ENCODE measurements at regions of chr1 and their contacts with region 1.

Region 1: GRCh38 chr1:11719313-11720032 is 16.5 kb upstream of the AGTRAP start:
- DNase-seq: peak; percentile 77 to 97
- H3K4me3 ChIP-seq: no peak overlapping the region
- CTCF ChIP-seq: no peak
- POLR2A ChIP-seq: no peak

Region 2: DNA sequence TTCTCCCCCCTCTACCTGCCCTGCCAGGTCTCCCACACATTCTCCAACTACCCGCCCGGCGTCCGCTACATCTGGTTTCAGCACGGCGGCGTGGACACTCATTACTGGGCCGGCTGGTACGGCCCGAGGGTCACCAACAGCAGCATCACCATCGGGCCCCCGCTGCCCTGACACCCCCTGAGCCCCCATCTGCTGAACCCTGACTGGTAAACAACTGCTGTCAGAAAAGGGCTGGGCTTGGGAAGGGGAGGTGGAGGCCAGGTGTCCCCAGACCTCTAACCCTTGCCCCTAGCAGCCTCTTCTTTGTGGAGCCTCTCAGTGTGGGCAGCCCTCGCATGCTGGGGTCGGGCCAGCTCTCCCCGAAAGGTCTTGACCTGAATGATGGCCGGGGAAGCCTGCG is 58.4 kb before region 1 on chr1:
- intact Hi-C with region 1: loop called (anchors 5 kb)
- DNase-seq: no peak
- H3K4me3 ChIP-seq: no peak overlapping the region
- CTCF ChIP-seq: no peak
- POLR2A ChIP-seq: no peak

Region 3: DNA sequence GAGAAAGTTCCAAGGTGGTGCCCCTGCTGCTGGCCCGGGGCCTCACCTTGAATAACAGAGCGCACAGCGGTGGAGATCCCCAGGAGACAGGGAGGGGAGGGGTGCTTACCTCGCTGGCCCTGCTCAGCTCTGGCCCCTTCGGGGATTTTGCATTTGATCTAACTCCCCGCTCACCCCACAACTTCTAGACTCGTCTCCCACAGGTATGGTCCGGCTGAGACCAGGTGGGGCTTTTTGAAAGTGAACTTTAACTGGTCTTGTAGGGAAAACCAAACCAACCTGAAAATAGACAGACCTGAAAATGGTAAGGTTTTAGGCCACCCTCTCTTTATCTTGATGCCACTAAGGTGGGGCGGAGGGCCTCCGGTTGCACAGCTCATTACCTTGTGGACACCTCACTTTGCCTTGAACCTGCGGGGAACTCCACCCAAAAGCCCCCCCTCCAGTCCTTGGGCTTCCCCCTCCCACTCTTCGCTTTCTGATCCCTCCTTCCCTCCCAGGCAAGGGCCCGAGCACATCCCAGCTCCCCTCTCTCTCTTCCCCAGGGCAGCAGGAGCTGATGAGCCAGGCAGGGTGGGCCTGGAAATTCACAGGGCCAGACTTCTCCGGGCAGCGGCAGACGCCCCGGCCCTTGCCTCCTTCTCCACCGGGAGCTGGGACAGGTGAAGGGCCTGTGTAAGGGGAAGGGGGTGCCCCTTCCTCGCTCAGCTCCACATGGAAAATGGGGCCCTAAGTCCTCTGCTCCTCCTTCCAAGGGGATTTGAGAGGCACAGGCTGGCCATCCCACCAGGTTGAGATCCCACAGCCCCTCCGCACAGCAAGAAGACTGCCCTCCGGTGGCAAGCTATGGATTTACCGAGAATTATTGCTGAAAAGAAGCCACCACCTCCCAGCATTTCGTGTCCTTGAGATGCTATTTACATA is 359.7 kb after region 1 on chr1:
- intact Hi-C with region 1: no loop called
- DNase-seq: no peak
- H3K4me3 ChIP-seq: no peak overlapping the region
- CTCF ChIP-seq: no peak
- POLR2A ChIP-seq: no peak

Measured in lower leg skin (tissue), 4 donors.